ENCODE measurements at regions of chr1 and their contacts with region 1.

Region 1: GRCh38 chr1:25997828-25998761 is at the start of gene PAFAH2:
- DNase-seq: peak; percentile 97 to 98
- ATAC-seq: peak; percentile 96
- total RNA-seq, gene PAFAH2: 49.2 to 51.9 TPM

Region 2: DNA sequence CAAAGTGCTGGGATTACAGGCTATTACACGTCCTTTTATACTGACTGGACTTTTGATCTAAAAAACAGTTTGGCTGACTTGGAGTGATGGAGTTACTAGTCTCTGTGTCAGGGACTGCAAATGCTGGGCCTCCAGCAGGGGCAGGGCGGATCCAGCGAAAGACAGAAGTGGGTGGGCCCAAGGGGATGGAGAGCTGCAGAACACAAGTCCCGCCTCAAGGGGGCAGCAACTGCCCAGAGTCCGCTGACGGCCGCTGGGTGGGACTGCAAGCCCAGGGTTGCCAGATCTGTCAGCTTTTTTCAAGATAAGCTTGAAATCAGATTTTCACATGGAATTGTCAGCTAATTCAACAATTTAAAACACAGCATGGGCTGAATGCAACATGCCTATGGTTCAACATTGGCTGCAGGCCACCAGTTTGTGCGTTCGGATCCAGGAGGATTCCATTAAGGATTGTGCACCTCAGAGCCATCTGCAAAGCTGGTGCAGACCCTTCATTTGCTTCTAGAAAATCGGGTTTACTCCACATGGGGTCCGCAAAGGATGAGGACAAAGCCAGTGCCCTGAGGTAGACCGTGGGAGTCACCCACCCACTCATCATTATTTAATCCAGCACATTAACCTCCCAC is 102.6 kb before region 1 on chr1:
- intact Hi-C with region 1: loop called (anchors 5 kb)
- DNase-seq: peak; percentile 84 to 89
- ATAC-seq: peak; percentile 90